Activated B cell treated with CpG ODN at 0.5 μM for 24 hours (primary cell): ENCODE measurements at regions of chr19 and their contacts with region 1.

Region 1: GRCh38 chr19:14347999-14348889 is 33.0 kb upstream of the ADGRE5 start:
- DNase-seq: peak; percentile 66
- ATAC-seq: peak; percentile 80
- H3K4me3 Mint-ChIP-seq: peak overlapping the region; percentile 57
- H3K27ac Mint-ChIP-seq: peak overlapping the region; percentile 24
- H3K4me1 Mint-ChIP-seq: peaks cover 27% of the 10 kb centered on the region
- H3K27me3 Mint-ChIP-seq: no peaks in the 10 kb centered on the region
- CTCF ChIP-seq: peak; percentile 83

Region 2: GRCh38 chr19:14198384-14199376 is 149.6 kb before region 1 on chr19:
- CTCF ChIA-PET with region 1: interaction called, 42 read pairs
- POLR2A ChIA-PET with region 1: no interaction called
- intact Hi-C with region 1: loop called (anchors 1 kb)
- DNase-seq: no peak
- ATAC-seq: no peak
- H3K4me3 Mint-ChIP-seq: no peak overlapping the region
- H3K27ac Mint-ChIP-seq: no peak overlapping the region
- H3K4me1 Mint-ChIP-seq: peaks cover 10% of the 10 kb centered on the region
- H3K27me3 Mint-ChIP-seq: peaks cover 5% of the 10 kb centered on the region
- CTCF ChIP-seq: no peak

Region 3: GRCh38 chr19:14277608-14278007 is 70.6 kb before region 1 on chr19:
- CTCF ChIA-PET with region 1: no interaction called
- POLR2A ChIA-PET with region 1: no interaction called
- intact Hi-C with region 1: loop called (anchors 10 kb)
- DNase-seq: no peak
- ATAC-seq: no peak
- H3K4me3 Mint-ChIP-seq: no peak overlapping the region
- H3K27ac Mint-ChIP-seq: no peak overlapping the region
- H3K4me1 Mint-ChIP-seq: peaks cover 6% of the 10 kb centered on the region
- H3K27me3 Mint-ChIP-seq: peaks cover 10% of the 10 kb centered on the region
- CTCF ChIP-seq: no peak

Region 4: GRCh38 chr19:14366498-14366915 is 18.3 kb after region 1 on chr19:
- CTCF ChIA-PET with region 1: interaction called, 22 read pairs
- POLR2A ChIA-PET with region 1: interaction called, 3 read pairs
- intact Hi-C with region 1: no loop called
- DNase-seq: peak; percentile 63
- ATAC-seq: peak; percentile 38
- H3K4me3 Mint-ChIP-seq: peak overlapping the region; percentile 22
- H3K27ac Mint-ChIP-seq: peak overlapping the region; percentile 93
- H3K4me1 Mint-ChIP-seq: peaks cover 77% of the 10 kb centered on the region
- H3K27me3 Mint-ChIP-seq: no peaks in the 10 kb centered on the region
- CTCF ChIP-seq: no peak

Region 5: GRCh38 chr19:14393329-14393728 is 45.1 kb after region 1 on chr19:
- CTCF ChIA-PET with region 1: no interaction called
- POLR2A ChIA-PET with region 1: no interaction called
- intact Hi-C with region 1: no loop called
- DNase-seq: no peak
- ATAC-seq: no peak
- H3K4me3 Mint-ChIP-seq: no peak overlapping the region
- H3K27ac Mint-ChIP-seq: no peak overlapping the region
- H3K4me1 Mint-ChIP-seq: no peaks in the 10 kb centered on the region
- H3K27me3 Mint-ChIP-seq: no peaks in the 10 kb centered on the region
- CTCF ChIP-seq: no peak